Calu3 (cell line): ENCODE measurements at regions of chr17 and their contacts with region 1.

Region 1: DNA sequence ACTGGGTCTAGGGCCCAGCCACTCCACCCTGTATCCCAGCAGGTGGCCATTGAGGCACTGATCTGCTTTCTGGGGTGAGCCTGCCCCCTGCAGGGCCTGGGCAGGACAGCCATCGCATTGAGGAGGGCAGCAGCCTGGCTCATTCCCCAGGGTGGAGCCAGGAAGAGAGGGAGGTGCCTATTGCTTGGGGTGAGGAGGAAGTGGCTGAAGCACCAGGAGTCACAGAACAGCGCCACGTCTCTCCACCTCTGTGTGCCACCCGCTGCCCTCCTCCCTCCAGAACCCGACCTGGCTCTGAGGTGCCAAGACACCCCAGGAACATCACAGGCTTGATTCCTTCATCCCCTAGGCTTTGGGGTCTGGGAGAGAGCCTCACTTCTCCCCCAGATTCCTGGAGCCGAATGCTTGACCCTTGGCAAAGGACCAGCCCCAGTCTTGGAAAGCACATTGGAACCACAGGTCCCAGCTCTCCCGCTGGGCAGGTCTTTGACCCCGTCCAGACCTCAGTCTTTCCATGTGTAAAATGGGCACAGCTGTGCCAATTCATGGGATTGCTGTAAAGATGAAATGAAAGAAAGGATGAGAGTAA is 7.2 kb upstream of the KRT36 start:
- DNase-seq: peak; percentile 97
- H3K4me3 Mint-ChIP-seq: no peak overlapping the region
- H3K27ac Mint-ChIP-seq: peak overlapping the region; percentile 40
- H3K4me1 Mint-ChIP-seq: peaks cover 77% of the 10 kb centered on the region
- H3K27me3 Mint-ChIP-seq: no peaks in the 10 kb centered on the region
- CTCF ChIP-seq: peak; percentile 96

Region 2: DNA sequence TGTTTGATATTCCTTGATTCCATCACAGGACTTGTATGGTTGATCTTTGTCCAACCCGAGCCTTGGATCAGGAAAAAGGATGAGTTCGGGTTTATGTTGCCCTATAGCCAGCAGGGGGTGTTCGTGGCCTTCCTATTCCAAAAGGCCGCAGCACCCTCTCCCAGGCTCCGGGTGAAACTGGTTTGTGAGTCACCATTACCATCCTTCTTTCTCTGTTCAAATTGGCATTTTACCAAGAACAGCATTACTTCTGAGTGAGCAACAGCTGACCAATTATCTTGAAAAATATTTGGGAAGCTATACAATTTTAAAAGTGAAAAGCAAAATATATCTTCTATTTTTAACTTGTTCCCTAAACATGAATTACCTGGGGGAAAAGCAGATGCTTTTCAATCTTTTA is 587.6 kb before region 1 on chr17:
- CTCF ChIA-PET with region 1: interaction called, 7 read pairs
- intact Hi-C with region 1: loop called (anchors 1 kb)
- DNase-seq: peak; percentile 99
- H3K4me3 Mint-ChIP-seq: no peak overlapping the region
- H3K27ac Mint-ChIP-seq: peak overlapping the region; percentile 86
- H3K4me1 Mint-ChIP-seq: peaks cover 94% of the 10 kb centered on the region
- H3K27me3 Mint-ChIP-seq: no peaks in the 10 kb centered on the region
- CTCF ChIP-seq: peak; percentile 98

Region 3: DNA sequence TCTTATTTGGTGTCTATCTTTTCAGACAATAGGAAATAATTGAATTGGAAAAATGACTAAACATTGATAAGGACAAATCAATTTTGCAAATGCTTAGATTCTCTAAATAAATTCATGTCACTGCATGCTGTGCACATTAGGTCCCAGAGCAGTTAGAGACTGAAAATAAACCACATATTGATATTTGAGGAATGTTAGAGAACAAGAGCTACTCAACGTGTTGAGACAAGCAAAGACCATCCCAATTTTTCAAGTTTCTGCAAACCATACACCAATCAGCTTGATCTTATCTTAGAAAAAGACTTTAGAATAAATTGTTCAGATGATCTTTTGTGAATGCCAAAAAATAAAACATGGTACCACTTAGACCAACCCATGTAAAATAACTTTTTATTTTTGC is 205.6 kb before region 1 on chr17:
- CTCF ChIA-PET with region 1: no interaction called
- intact Hi-C with region 1: no loop called
- DNase-seq: no peak
- H3K4me3 Mint-ChIP-seq: no peak overlapping the region
- H3K27ac Mint-ChIP-seq: no peak overlapping the region
- H3K4me1 Mint-ChIP-seq: peaks cover 14% of the 10 kb centered on the region
- H3K27me3 Mint-ChIP-seq: no peaks in the 10 kb centered on the region
- CTCF ChIP-seq: no peak

Region 4: GRCh38 chr17:41338961-41339485 is 157.9 kb before region 1 on chr17:
- CTCF ChIA-PET with region 1: no interaction called
- intact Hi-C with region 1: loop called (anchors 10 kb)
- DNase-seq: no peak
- H3K4me3 Mint-ChIP-seq: no peak overlapping the region
- H3K27ac Mint-ChIP-seq: peak overlapping the region; percentile 25
- H3K4me1 Mint-ChIP-seq: peaks cover 32% of the 10 kb centered on the region
- H3K27me3 Mint-ChIP-seq: no peaks in the 10 kb centered on the region
- CTCF ChIP-seq: no peak

Region 5: GRCh38 chr17:41417576-41418015 is 79.3 kb before region 1 on chr17:
- CTCF ChIA-PET with region 1: interaction called, 8 read pairs
- intact Hi-C with region 1: loop called (anchors 10 kb)
- DNase-seq: peak; percentile 72
- H3K4me3 Mint-ChIP-seq: peak overlapping the region; percentile 29
- H3K27ac Mint-ChIP-seq: peak overlapping the region; percentile 84
- H3K4me1 Mint-ChIP-seq: peaks cover 72% of the 10 kb centered on the region
- H3K27me3 Mint-ChIP-seq: no peaks in the 10 kb centered on the region
- CTCF ChIP-seq: peak; percentile 91

Region 6: GRCh38 chr17:41521574-41522261 is 24.8 kb after region 1 on chr17:
- CTCF ChIA-PET with region 1: interaction called, 10 read pairs
- intact Hi-C with region 1: no loop called
- DNase-seq: peak; percentile 100
- H3K4me3 Mint-ChIP-seq: peak overlapping the region; percentile 95
- H3K27ac Mint-ChIP-seq: peak overlapping the region; percentile 99
- H3K4me1 Mint-ChIP-seq: peaks cover 73% of the 10 kb centered on the region
- H3K27me3 Mint-ChIP-seq: no peaks in the 10 kb centered on the region
- CTCF ChIP-seq: peak; percentile 11

Region 7: DNA sequence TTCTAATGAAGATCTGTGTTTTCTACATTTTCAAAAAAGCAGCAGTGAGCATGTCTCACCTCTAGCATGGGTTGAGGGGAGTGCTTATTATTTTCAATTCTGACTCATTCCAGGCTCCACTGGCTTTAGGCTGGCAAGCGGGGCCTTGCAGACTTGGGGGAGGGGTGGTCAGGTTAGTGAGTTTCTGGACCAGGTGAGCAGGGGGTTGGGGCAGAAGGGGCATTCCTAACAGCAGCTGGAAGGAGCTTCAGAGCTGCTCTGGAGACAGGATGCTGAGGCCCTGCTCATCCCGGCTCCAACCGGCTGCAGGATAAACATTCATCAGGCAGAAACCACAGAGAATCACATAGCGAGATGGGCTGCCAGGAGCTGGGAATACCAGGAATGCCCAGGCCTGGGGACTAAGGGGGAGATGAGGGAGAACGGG is 41.7 kb after region 1 on chr17:
- CTCF ChIA-PET with region 1: no interaction called
- intact Hi-C with region 1: no loop called
- DNase-seq: no peak
- H3K4me3 Mint-ChIP-seq: no peak overlapping the region
- H3K27ac Mint-ChIP-seq: no peak overlapping the region
- H3K4me1 Mint-ChIP-seq: peaks cover 86% of the 10 kb centered on the region
- H3K27me3 Mint-ChIP-seq: no peaks in the 10 kb centered on the region
- CTCF ChIP-seq: no peak